Natural killer cell (primary cell): ENCODE measurements at regions of chr18 and their contacts with region 1.

Region 1: GRCh38 chr18:21955757-21956652 is 213.4 kb upstream of the GATA6 start:
- DNase-seq: peak; percentile 67 to 85
- ATAC-seq: peak; percentile 84 to 100 (median 89)
- H3K4me3 ChIP-seq: no peak overlapping the region
- H3K4me3 Mint-ChIP-seq: no peak overlapping the region
- H3K27ac ChIP-seq: no peak overlapping the region
- H3K27ac Mint-ChIP-seq: no peak overlapping the region
- H3K4me1 ChIP-seq: no peaks in the 10 kb centered on the region
- H3K4me1 Mint-ChIP-seq: no peaks in the 10 kb centered on the region
- H3K27me3 ChIP-seq: no peaks in the 10 kb centered on the region
- H3K27me3 Mint-ChIP-seq: peaks cover 20 to 31% of the 10 kb centered on the region in 2 donors
- CTCF ChIP-seq: peak; percentile 95

Region 2: GRCh38 chr18:21489119-21489750 is 466.8 kb before region 1 on chr18:
- intact Hi-C with region 1: loop called (anchors 1 kb)
- DNase-seq: peak in 1 of 2 donors; percentile 65
- ATAC-seq: peak in 1 of 3 donors; percentile 53
- H3K4me3 ChIP-seq: no peak overlapping the region
- H3K4me3 Mint-ChIP-seq: no peak overlapping the region
- H3K27ac ChIP-seq: no peak overlapping the region
- H3K27ac Mint-ChIP-seq: no peak overlapping the region
- H3K4me1 ChIP-seq: no peaks in the 10 kb centered on the region
- H3K4me1 Mint-ChIP-seq: no peaks in the 10 kb centered on the region
- H3K27me3 ChIP-seq: no peaks in the 10 kb centered on the region
- H3K27me3 Mint-ChIP-seq: peaks cover 0 to 3% of the 10 kb centered on the region in 2 donors
- CTCF ChIP-seq: peak; percentile 49

Region 3: GRCh38 chr18:21831413-21831831 is 124.6 kb before region 1 on chr18:
- intact Hi-C with region 1: no loop called
- DNase-seq: no peak
- ATAC-seq: no peak
- H3K4me3 ChIP-seq: no peak overlapping the region
- H3K4me3 Mint-ChIP-seq: no peak overlapping the region
- H3K27ac ChIP-seq: no peak overlapping the region
- H3K27ac Mint-ChIP-seq: no peak overlapping the region
- H3K4me1 ChIP-seq: no peaks in the 10 kb centered on the region
- H3K4me1 Mint-ChIP-seq: no peaks in the 10 kb centered on the region
- H3K27me3 ChIP-seq: no peaks in the 10 kb centered on the region
- H3K27me3 Mint-ChIP-seq: no peaks in the 10 kb centered on the region
- CTCF ChIP-seq: no peak

Region 4: DNA sequence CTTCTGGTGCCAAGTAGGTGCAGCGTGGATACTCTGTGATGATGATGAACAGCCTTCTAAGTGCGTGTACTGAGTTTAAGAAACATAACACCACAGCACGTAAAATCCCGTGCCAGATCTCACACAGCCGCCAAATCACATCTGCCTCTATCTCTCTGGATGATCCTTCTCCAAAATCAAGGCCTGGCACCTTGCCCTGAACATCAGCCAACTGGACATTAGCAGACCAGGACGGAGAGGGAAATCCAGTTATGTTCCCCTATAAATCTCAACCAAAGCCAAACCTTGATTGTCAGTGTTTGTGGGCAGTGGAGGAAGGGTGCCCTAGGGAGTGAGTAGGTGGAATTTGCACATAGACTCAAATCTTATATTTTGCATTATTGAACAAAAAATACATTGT is 51.1 kb before region 1 on chr18:
- intact Hi-C with region 1: loop called (anchors 5 kb)
- DNase-seq: no peak
- ATAC-seq: no peak
- H3K4me3 ChIP-seq: no peak overlapping the region
- H3K4me3 Mint-ChIP-seq: no peak overlapping the region
- H3K27ac ChIP-seq: no peak overlapping the region
- H3K27ac Mint-ChIP-seq: no peak overlapping the region
- H3K4me1 ChIP-seq: no peaks in the 10 kb centered on the region
- H3K4me1 Mint-ChIP-seq: no peaks in the 10 kb centered on the region
- H3K27me3 ChIP-seq: peaks cover 3% of the 10 kb centered on the region
- H3K27me3 Mint-ChIP-seq: peaks cover 6 to 21% of the 10 kb centered on the region in 2 donors
- CTCF ChIP-seq: no peak

Region 5: GRCh38 chr18:21980744-21981143 is 24.7 kb after region 1 on chr18:
- intact Hi-C with region 1: no loop called
- DNase-seq: no peak
- ATAC-seq: no peak
- H3K4me3 ChIP-seq: no peak overlapping the region
- H3K4me3 Mint-ChIP-seq: no peak overlapping the region
- H3K27ac ChIP-seq: no peak overlapping the region
- H3K27ac Mint-ChIP-seq: no peak overlapping the region
- H3K4me1 ChIP-seq: no peaks in the 10 kb centered on the region
- H3K4me1 Mint-ChIP-seq: no peaks in the 10 kb centered on the region
- H3K27me3 ChIP-seq: no peaks in the 10 kb centered on the region
- H3K27me3 Mint-ChIP-seq: peaks cover 0 to 3% of the 10 kb centered on the region in 2 donors
- CTCF ChIP-seq: no peak